ENCODE measurements at regions of chr2 and their contacts with region 1.

Region 1: DNA sequence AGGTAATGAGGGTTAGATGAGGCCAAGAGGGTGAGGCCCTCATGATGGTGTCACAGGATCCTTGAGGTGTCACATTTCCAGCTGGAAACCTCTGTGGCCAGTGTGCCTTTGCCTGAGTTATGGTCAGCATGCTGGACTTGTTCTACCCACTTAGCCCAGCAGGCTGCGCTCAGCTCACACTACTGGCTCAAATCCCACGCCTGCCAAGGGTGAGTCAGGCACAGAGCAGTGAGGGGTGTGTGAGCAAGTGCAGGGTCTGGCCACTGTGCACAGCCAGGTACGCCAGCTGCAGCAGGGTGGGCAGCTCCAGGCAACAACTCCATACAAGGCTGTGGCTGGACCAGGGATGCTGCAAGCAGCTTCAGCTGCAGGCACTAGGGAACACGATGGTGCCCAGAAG is 616.6 kb upstream of the FSHR start:
- H3K4me3 ChIP-seq: no peak overlapping the region
- H3K27ac ChIP-seq: no peak overlapping the region
- H3K4me1 ChIP-seq: no peaks in the 10 kb centered on the region
- CTCF ChIP-seq: 0 out of 2 replicates have a peak, but pooled peaks have one; percentile 30

Region 2: DNA sequence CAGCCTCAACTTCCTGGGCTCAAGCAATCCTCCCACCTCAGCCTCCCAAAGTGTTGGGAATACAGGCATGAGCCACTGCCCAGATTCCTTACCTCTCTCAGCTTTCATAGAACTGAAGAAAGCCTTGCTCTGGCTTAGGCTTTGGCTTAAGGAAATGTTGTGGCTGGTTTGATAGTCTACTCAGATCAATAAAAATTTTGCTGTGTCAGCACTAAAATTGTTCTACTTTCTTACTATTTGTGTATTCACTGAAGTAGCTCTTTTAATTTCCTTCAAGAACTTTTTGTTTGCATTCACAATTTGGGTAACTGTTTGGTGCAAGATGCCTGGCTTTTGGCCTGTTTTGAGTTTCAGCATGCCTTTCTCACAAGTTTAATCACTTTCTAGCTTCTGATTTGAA is 17.4 kb after region 1 on chr2:
- CTCF ChIA-PET with region 1: no interaction called
- POLR2A ChIA-PET with region 1: no interaction called
- H3K4me3 ChIP-seq: no peak overlapping the region
- H3K27ac ChIP-seq: no peak overlapping the region
- H3K4me1 ChIP-seq: no peaks in the 10 kb centered on the region
- CTCF ChIP-seq: no peak

Region 3: GRCh38 chr2:49798570-49798969 is 27.7 kb after region 1 on chr2:
- CTCF ChIA-PET with region 1: no interaction called
- POLR2A ChIA-PET with region 1: no interaction called
- H3K4me3 ChIP-seq: no peak overlapping the region
- H3K27ac ChIP-seq: no peak overlapping the region
- H3K4me1 ChIP-seq: no peaks in the 10 kb centered on the region
- CTCF ChIP-seq: no peak

Region 4: GRCh38 chr2:50143822-50144575 is 373.1 kb after region 1 on chr2:
- CTCF ChIA-PET with region 1: interaction called, 10 read pairs
- POLR2A ChIA-PET with region 1: no interaction called
- H3K4me3 ChIP-seq: no peak overlapping the region; the same call in 1 of the 2 replicates
- H3K27ac ChIP-seq: no peak overlapping the region
- H3K4me1 ChIP-seq: no peaks in the 10 kb centered on the region
- CTCF ChIP-seq: no peak

Region 5: GRCh38 chr2:50401772-50402653 is 631.1 kb after region 1 on chr2:
- CTCF ChIA-PET with region 1: interaction called, 27 read pairs
- POLR2A ChIA-PET with region 1: no interaction called
- H3K4me3 ChIP-seq: no peak overlapping the region
- H3K27ac ChIP-seq: no peak overlapping the region
- H3K4me1 ChIP-seq: no peaks in the 10 kb centered on the region
- CTCF ChIP-seq: no peak